Activated CD8-positive, alpha-beta memory T cell treated with anti-CD3 and anti-CD28 coated beads, Interleukin-2, amount 10 ng/mL, durations not matched to agents 7 days and 5 days (primary cell): ENCODE measurements at regions of chr6 and their contacts with region 1.

Region 1: GRCh38 chr6:108492131-108492766 is 68.5 kb upstream of the FOXO3 start:
- DNase-seq: no peak
- ATAC-seq: no peak
- H3K4me3 Mint-ChIP-seq: no peak overlapping the region
- H3K27ac Mint-ChIP-seq: no peak overlapping the region
- H3K4me1 Mint-ChIP-seq: no peaks in the 10 kb centered on the region
- H3K27me3 Mint-ChIP-seq: peaks cover 4% of the 10 kb centered on the region

Region 2: GRCh38 chr6:108113557-108114519 is 378.4 kb before region 1 on chr6:
- CTCF ChIA-PET with region 1: interaction called, 12 read pairs
- DNase-seq: no peak
- ATAC-seq: no peak
- H3K4me3 Mint-ChIP-seq: peak overlapping the region; percentile 52
- H3K27ac Mint-ChIP-seq: no peak overlapping the region
- H3K4me1 Mint-ChIP-seq: peaks cover 43% of the 10 kb centered on the region
- H3K27me3 Mint-ChIP-seq: peaks cover 83% of the 10 kb centered on the region

Region 3: GRCh38 chr6:108174371-108175175 is 317.7 kb before region 1 on chr6:
- CTCF ChIA-PET with region 1: interaction called, 10 read pairs
- DNase-seq: peak; percentile 64
- ATAC-seq: peak; percentile 51
- H3K4me3 Mint-ChIP-seq: no peak overlapping the region
- H3K27ac Mint-ChIP-seq: no peak overlapping the region
- H3K4me1 Mint-ChIP-seq: peaks cover 14% of the 10 kb centered on the region
- H3K27me3 Mint-ChIP-seq: peaks cover 95% of the 10 kb centered on the region

Region 4: DNA sequence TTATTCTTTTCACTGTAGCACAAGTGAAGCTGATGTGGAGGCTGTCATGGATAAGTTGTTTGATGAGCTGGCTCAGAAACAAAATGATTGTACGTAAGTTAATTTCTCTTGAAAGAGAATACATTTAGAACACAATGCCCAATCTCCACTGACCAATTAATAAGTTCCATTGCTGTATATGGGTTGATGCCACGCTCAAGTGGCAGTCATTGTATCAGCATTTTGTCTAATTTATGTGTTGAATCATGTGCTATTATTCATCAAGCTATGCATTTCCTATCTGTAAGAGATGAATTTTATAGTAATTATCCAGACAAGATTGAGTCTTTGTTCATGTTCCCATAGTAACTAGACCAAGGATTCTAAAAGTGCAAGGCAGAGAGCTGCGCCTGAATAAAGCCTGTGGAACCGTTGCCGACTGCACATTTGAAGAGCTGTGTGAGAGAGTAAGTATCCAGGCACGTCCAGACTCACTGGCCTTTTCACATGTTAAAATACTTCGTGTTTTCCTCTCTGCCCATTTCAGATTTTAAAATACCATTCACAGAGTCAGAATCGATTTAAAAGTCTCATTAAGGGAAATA is 15.3 kb before region 1 on chr6:
- CTCF ChIA-PET with region 1: interaction called, 10 read pairs
- DNase-seq: no peak
- ATAC-seq: no peak
- H3K4me3 Mint-ChIP-seq: no peak overlapping the region
- H3K27ac Mint-ChIP-seq: no peak overlapping the region
- H3K4me1 Mint-ChIP-seq: no peaks in the 10 kb centered on the region
- H3K27me3 Mint-ChIP-seq: peaks cover 9% of the 10 kb centered on the region